ENCODE measurements at regions of chr1 and their contacts with region 1.

Region 1: DNA sequence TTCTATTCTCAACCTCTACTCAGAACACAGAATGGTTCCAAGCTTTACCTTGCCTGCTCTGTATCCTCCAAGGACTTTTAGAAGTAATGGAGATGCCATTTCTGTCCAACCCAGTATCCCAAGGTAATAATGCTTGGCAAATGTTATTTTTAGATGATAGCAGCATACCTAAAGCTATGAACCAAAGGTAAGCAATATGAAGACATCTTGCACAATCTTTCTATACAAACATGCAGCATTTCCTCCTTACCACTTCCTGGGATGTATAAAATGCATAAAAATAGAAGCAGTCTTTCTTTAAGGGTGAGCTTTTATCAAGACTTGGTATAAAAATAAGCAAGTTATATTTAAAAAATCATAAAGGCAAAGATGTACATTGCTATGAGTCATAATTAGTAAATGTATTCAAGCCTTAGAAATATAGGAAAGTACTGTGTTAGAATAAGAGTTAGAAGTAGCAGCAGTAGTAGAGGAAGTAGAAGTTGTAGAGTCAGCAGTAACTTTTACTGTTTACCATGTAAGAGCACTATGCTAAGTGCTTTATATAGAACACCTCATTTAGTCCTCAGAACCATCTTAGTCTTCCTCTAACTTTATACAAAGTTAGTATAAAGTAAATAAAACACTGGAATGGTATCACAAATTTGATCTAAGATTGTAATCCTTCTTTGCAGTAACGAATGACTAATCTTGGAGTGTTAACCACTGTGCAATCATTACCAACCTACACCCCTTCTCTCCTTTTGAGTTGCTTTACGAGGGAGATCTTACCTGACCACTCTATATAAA is 371.4 kb downstream of the VAV3 start:
- DNase-seq: no peak
- ATAC-seq: no peak
- H3K4me3 ChIP-seq: no peak overlapping the region
- H3K27ac ChIP-seq: no peak overlapping the region
- H3K4me1 ChIP-seq: no peaks in the 10 kb centered on the region
- H3K27me3 ChIP-seq: no peaks in the 10 kb centered on the region
- CTCF ChIP-seq: no peak
- POLR2A ChIP-seq: no peak
- RAD21 ChIP-seq: no peak

Region 2: DNA sequence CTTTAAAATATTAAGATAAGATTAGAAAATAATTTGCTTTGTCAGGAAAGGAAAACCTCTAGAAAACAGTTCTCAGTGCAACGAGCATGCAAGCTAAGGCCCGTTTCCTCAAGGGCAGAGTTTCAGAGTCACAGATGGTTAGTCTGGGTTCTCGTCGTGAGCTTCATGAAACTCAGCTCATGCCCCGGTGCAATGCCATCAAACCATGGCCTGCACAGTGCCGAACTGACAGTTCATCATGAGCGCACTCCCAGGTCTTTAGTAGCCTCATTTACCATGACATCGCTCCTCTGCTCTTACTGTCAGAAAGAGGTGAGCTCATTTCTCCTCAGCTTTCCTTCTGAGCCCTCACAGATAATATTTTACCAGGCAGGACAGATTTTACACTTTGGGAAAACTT is 133.6 kb before region 1 on chr1:
- CTCF ChIA-PET with region 1: no interaction called
- POLR2A ChIA-PET with region 1: no interaction called
- dilution Hi-C with region 1: no loop called
- in situ Hi-C with region 1: no loop called
- intact Hi-C with region 1: no loop called
- DNase-seq: no peak
- ATAC-seq: no peak
- H3K4me3 ChIP-seq: no peak overlapping the region
- H3K27ac ChIP-seq: no peak overlapping the region
- H3K4me1 ChIP-seq: no peaks in the 10 kb centered on the region
- H3K27me3 ChIP-seq: no peaks in the 10 kb centered on the region
- CTCF ChIP-seq: no peak
- POLR2A ChIP-seq: no peak
- RAD21 ChIP-seq: no peak

Region 3: DNA sequence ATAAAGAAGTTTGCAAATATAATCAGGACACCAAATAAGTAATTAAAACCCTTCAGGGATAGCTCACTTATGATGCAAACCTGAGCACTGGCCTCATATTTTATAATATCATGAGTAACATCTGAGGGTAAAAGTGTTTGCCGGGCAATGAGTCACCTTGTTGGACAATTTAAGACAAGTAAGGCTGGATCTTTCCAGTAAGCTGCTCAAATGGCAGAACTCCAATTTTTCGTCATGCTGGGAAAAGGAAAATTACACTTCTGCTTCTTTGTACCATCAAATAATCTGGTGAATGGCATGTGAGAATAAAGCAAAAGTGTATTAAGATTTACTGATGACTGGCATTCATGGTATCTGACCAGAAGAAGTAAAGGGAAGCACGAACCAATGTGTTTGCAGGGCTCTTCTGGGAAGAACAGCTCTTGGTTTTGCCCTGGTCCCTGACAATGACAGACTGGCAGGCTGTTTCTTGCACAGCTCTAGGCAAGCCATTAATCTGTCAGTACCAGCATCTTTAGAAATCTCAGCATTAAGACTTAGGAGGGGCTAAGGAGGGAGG is 20.9 kb before region 1 on chr1:
- CTCF ChIA-PET with region 1: no interaction called
- POLR2A ChIA-PET with region 1: no interaction called
- dilution Hi-C with region 1: no loop called
- in situ Hi-C with region 1: no loop called
- intact Hi-C with region 1: loop called (anchors 2 kb)
- DNase-seq: peak; percentile 31
- ATAC-seq: no peak
- H3K4me3 ChIP-seq: no peak overlapping the region
- H3K27ac ChIP-seq: no peak overlapping the region
- H3K4me1 ChIP-seq: no peaks in the 10 kb centered on the region
- H3K27me3 ChIP-seq: no peaks in the 10 kb centered on the region
- CTCF ChIP-seq: no peak
- POLR2A ChIP-seq: no peak
- RAD21 ChIP-seq: no peak

Region 4: DNA sequence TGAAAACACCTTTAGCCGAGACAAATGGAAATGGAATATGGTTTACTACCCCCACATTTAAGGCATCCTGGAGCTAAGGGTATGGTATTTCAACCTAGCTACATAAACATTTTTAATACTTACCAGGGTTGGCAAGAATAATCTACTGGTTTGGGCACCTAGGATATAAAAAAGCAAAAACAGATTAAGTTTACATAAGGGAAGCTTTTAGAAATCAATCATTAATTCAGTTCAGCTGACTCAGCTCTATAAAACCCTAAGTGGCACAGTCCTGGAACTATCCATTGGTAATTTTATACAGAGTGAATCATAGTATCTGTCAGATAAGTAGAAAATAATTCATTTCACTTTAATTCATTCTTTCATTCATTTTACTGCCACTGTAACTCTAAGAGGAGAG is 16.2 kb after region 1 on chr1:
- CTCF ChIA-PET with region 1: no interaction called
- POLR2A ChIA-PET with region 1: no interaction called
- dilution Hi-C with region 1: no loop called
- in situ Hi-C with region 1: no loop called
- intact Hi-C with region 1: loop called (anchors 1 kb)
- DNase-seq: no peak
- ATAC-seq: no peak
- H3K4me3 ChIP-seq: no peak overlapping the region
- H3K27ac ChIP-seq: no peak overlapping the region
- H3K4me1 ChIP-seq: no peaks in the 10 kb centered on the region
- H3K27me3 ChIP-seq: no peaks in the 10 kb centered on the region
- CTCF ChIP-seq: no peak
- POLR2A ChIP-seq: no peak
- RAD21 ChIP-seq: no peak

Measured in IMR-90 (cell line).